Activated CD4-positive, alpha-beta T cell treated with anti-CD3 and anti-CD28 coated beads for 36 hours (primary cell): ENCODE measurements at regions of chr2 and their contacts with region 1.

Region 1: DNA sequence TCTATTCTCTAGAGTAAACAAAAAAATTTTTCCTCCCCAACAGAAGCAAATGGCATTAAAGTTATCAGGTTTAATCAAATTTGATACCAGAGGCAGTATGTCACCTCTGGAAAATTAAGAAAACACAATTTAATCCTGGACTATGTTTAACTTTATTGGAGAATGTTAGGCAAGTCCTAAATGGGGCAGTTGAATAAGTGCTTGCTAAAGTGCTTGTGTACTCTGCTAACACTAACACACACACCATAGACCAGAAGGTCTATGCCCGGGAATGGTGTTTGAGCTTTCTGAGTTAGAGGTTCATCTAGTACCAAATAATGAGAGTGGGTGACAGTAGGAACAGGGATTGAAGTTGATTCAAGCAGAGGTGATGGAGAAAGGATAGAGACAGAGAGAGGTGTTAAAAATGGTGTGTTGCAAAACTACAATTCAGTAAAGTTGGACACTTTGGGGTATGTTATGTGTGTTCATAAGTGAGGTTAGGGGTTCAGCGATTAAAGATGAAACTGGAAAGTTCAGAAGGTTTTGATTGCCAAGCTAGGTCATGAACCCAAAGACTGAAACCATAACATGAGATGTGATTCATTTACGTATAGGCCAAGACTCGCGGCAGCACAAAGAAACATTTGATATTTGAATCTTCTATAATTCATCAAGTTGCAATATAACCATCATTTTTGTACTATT is 40.5 kb upstream of the PEX13 start:
- DNase-seq: peak; percentile 53
- ATAC-seq: peak; percentile 94
- H3K4me3 Mint-ChIP-seq: peak overlapping the region; percentile 2
- H3K27ac Mint-ChIP-seq: peak overlapping the region; percentile 86
- H3K4me1 Mint-ChIP-seq: peaks cover 44% of the 10 kb centered on the region
- H3K27me3 Mint-ChIP-seq: no peaks in the 10 kb centered on the region

Region 2: GRCh38 chr2:60152226-60152833 is 824.7 kb before region 1 on chr2:
- CTCF ChIA-PET with region 1: no interaction called
- POLR2A ChIA-PET with region 1: no interaction called
- intact Hi-C with region 1: no loop called
- DNase-seq: no peak
- ATAC-seq: no peak
- H3K4me3 Mint-ChIP-seq: no peak overlapping the region
- H3K27ac Mint-ChIP-seq: no peak overlapping the region
- H3K4me1 Mint-ChIP-seq: peaks cover 9% of the 10 kb centered on the region
- H3K27me3 Mint-ChIP-seq: peaks cover 2% of the 10 kb centered on the region

Region 3: DNA sequence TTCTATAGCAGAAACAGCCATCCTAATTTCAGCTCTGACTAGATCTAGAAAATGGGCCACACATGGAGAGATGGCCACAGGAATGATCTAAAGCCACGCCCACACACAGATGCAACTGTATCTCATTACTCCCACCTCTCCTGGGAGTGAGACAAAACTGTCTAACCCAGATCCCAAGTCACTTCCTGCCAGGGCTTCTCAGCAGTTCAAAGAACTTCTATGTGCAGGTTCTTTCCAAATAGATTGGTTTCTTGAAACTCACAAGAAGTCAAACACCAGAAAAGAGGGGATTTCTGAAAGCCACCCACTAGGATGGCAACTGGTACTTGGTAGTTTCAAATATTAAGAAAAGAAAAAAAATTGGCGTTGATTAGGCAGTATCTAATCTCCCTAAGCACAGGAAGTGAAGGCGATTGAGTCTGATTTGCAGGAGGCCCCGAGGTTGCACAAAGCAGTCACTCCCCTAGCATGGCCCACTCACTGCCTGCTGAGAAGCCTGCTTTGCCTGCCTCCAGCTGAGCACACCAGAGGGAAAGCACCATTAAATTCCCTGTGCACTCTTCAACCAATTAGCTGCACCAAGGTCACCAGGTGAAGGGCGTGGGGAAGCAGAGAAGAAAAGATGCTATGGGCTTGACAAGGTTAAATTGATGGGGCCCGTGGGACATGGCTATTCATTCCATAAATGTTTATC is 169.9 kb before region 1 on chr2:
- CTCF ChIA-PET with region 1: interaction called, 8 read pairs
- POLR2A ChIA-PET with region 1: no interaction called
- intact Hi-C with region 1: loop called in 1 of 2 experiments (anchors 1 kb)
- DNase-seq: peak; percentile 83
- ATAC-seq: peak; percentile 92
- H3K4me3 Mint-ChIP-seq: peak overlapping the region; percentile 41
- H3K27ac Mint-ChIP-seq: peak overlapping the region; percentile 86
- H3K4me1 Mint-ChIP-seq: peaks cover 53% of the 10 kb centered on the region
- H3K27me3 Mint-ChIP-seq: no peaks in the 10 kb centered on the region

Region 4: GRCh38 chr2:60832621-60833020 is 144.4 kb before region 1 on chr2:
- CTCF ChIA-PET with region 1: no interaction called
- POLR2A ChIA-PET with region 1: no interaction called
- intact Hi-C with region 1: loop called in 1 of 2 experiments (anchors 1 kb)
- DNase-seq: no peak
- ATAC-seq: peak; percentile 89
- H3K4me3 Mint-ChIP-seq: no peak overlapping the region
- H3K27ac Mint-ChIP-seq: peak overlapping the region; percentile 80
- H3K4me1 Mint-ChIP-seq: peaks cover 41% of the 10 kb centered on the region
- H3K27me3 Mint-ChIP-seq: peaks cover 4% of the 10 kb centered on the region

Region 5: GRCh38 chr2:60873381-60873780 is 103.6 kb before region 1 on chr2:
- CTCF ChIA-PET with region 1: no interaction called
- POLR2A ChIA-PET with region 1: no interaction called
- intact Hi-C with region 1: loop called (anchors 1 to 2 kb)
- DNase-seq: peak; percentile 42
- ATAC-seq: peak; percentile 60
- H3K4me3 Mint-ChIP-seq: peak overlapping the region; percentile 25
- H3K27ac Mint-ChIP-seq: peak overlapping the region; percentile 85
- H3K4me1 Mint-ChIP-seq: peaks cover 31% of the 10 kb centered on the region
- H3K27me3 Mint-ChIP-seq: no peaks in the 10 kb centered on the region

Region 6: DNA sequence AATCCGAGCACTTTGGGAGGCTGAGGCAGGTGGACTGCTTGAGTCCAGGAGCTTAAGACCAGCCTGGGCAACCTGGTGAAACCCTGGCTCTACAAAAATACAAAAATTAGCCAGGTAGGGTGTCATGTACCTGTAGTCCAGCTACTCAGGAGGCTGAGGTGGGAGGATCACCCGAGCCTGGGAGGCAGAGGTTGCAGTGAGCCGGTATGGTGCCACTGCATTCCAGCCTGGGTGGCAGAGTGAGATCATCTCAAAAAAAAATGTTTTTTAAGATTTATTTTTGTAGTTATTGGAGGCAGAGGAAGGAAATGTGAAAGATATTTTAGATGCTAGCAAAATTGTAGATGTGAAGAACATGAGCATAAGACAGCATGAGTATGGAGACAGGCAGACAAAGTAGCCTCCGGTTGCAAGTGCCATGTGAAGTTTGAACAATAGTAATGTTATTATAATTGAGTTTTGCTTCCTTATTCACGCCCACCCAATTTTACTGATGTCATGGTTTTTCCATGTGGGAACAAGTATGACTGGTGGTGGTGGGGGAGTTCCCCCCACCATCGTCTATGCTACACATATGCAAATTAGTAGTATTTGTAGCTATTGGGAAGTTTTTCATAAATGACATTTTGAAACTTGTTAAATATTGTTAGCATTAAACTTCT is 77.7 kb before region 1 on chr2:
- CTCF ChIA-PET with region 1: no interaction called
- POLR2A ChIA-PET with region 1: no interaction called
- intact Hi-C with region 1: loop called in 1 of 2 experiments (anchors 1 kb)
- DNase-seq: peak; percentile 74
- ATAC-seq: peak; percentile 86
- H3K4me3 Mint-ChIP-seq: peak overlapping the region; percentile 35
- H3K27ac Mint-ChIP-seq: peak overlapping the region; percentile 79
- H3K4me1 Mint-ChIP-seq: peaks cover 46% of the 10 kb centered on the region
- H3K27me3 Mint-ChIP-seq: no peaks in the 10 kb centered on the region

Region 7: GRCh38 chr2:60936757-60937156 is 40.3 kb before region 1 on chr2:
- CTCF ChIA-PET with region 1: no interaction called
- POLR2A ChIA-PET with region 1: no interaction called
- intact Hi-C with region 1: no loop called
- DNase-seq: no peak
- ATAC-seq: no peak
- H3K4me3 Mint-ChIP-seq: no peak overlapping the region
- H3K27ac Mint-ChIP-seq: no peak overlapping the region
- H3K4me1 Mint-ChIP-seq: peaks cover 9% of the 10 kb centered on the region
- H3K27me3 Mint-ChIP-seq: no peaks in the 10 kb centered on the region

Region 8: GRCh38 chr2:60964651-60965498 is 12.1 kb before region 1 on chr2:
- CTCF ChIA-PET with region 1: interaction called, 22 read pairs
- POLR2A ChIA-PET with region 1: interaction called, 10 read pairs
- intact Hi-C with region 1: no loop called
- DNase-seq: no peak
- ATAC-seq: no peak
- H3K4me3 Mint-ChIP-seq: no peak overlapping the region
- H3K27ac Mint-ChIP-seq: peak overlapping the region; percentile 42
- H3K4me1 Mint-ChIP-seq: peaks cover 38% of the 10 kb centered on the region
- H3K27me3 Mint-ChIP-seq: no peaks in the 10 kb centered on the region